ENCODE measurements at regions of chr12 and their contacts with region 1.

Region 1: DNA sequence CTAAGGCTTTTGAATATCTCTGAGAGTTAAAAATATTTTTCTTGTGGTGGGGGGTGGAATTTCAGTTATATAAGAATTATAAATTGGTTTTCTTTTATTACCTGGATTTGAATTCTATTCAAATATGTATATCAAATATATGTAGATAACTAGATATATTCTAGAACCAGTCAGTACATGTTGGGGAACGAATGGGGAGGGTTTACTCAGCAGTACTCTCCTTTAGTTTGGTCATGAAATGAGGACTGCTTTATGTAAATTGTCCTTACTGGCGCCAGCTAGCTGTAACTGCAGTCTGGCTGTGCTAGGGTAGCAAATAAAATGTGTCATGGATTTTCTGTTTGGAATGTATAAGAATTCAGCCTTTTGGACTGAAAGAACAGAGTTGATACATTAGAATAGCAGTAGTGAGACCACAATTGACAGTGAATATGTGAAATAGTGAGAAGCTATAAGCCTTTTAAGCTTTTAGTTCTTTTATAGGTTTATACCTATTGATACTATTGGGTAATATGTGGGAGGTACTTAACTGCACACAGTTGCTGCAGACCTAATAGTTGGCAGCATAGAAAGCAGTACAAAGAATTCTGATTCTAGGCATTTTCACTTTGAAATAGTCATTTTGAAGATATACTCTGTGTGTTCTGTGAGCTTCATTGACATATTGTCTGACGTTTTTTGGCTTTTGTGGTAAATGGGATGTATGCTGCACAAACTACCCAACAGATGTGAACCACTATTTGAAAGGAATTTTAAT is 29.0 kb downstream of the ATF7IP start:
- DNase-seq: peak; percentile 53
- H3K4me3 Mint-ChIP-seq: peak overlapping the region; percentile 74
- H3K27ac Mint-ChIP-seq: peak overlapping the region; percentile 93
- H3K4me1 Mint-ChIP-seq: peaks cover 79% of the 10 kb centered on the region
- H3K27me3 Mint-ChIP-seq: no peaks in the 10 kb centered on the region

Region 2: GRCh38 chr12:14332482-14332881 is 62.0 kb before region 1 on chr12:
- CTCF ChIA-PET with region 1: no interaction called
- POLR2A ChIA-PET with region 1: no interaction called
- intact Hi-C with region 1: no loop called
- DNase-seq: no peak
- H3K4me3 Mint-ChIP-seq: no peak overlapping the region
- H3K27ac Mint-ChIP-seq: no peak overlapping the region
- H3K4me1 Mint-ChIP-seq: no peaks in the 10 kb centered on the region
- H3K27me3 Mint-ChIP-seq: no peaks in the 10 kb centered on the region

Region 3: GRCh38 chr12:14417715-14418114 is 23.2 kb after region 1 on chr12:
- CTCF ChIA-PET with region 1: interaction called, 5 read pairs
- POLR2A ChIA-PET with region 1: interaction called, 3 read pairs
- intact Hi-C with region 1: loop called (anchors 1 kb)
- DNase-seq: peak; percentile 85
- H3K4me3 Mint-ChIP-seq: peak overlapping the region; percentile 69
- H3K27ac Mint-ChIP-seq: peak overlapping the region; percentile 94
- H3K4me1 Mint-ChIP-seq: peaks cover 63% of the 10 kb centered on the region
- H3K27me3 Mint-ChIP-seq: no peaks in the 10 kb centered on the region